Adrenal gland (tissue), 19 donors: ENCODE measurements at regions of chr19 and their contacts with region 1.

Region 1: DNA sequence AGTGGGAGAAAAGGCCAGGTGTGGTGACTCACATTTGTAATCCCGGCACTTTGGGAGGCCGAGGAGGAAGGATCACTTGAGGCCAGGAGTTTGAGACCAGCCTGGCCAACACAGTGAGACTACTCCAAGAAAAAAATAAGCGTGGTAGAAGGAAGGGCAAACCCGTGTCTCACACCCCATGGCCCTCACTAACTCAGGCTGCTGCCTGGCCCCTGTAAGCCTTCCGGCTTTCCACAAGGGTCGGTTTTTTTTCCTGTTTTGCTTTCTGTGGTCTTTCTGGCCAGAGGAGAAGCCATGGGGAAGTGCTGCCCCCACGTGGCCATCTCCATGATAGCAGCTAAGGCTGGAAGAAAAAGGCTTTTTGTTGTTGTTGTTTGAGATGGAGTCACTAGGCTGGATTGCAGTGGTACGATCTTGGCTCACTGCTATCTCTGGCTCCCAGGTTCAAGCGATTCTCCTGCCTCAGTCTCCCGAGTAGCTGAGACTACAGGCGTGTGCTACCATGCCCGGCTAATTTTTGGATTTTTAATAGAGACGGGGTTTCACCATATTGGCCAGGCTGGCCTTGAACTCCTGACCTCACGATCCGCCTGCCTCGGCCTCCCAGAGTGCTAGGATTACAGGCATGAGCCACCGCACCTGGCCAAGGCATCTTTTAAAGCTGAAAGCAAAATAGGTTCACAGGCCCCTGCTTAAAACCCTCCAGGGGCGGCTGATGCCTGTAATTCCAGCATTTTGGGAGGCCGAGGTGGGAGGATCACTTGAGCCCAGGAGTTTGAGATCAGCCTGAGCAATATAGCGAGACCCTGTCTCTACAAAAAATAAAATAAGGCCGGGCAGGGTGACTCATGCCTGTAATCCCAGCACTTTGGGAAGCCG is 7.5 kb upstream of the ARHGEF18 start:
- DNase-seq: peak; percentile 66 to 96 (median 86)
- H3K4me3 ChIP-seq: peak overlapping the region in 1 of 4 donors; percentile 17
- H3K27ac ChIP-seq: peak overlapping the region in 1 of 5 donors; percentile 14
- H3K4me1 ChIP-seq: peaks cover 0 to 12% of the 10 kb centered on the region in 2 donors
- H3K27me3 ChIP-seq: no peaks in the 10 kb centered on the region
- CTCF ChIP-seq: peak; percentile 96 to 98 (median 98)
- POLR2A ChIP-seq: no peak

Region 2: DNA sequence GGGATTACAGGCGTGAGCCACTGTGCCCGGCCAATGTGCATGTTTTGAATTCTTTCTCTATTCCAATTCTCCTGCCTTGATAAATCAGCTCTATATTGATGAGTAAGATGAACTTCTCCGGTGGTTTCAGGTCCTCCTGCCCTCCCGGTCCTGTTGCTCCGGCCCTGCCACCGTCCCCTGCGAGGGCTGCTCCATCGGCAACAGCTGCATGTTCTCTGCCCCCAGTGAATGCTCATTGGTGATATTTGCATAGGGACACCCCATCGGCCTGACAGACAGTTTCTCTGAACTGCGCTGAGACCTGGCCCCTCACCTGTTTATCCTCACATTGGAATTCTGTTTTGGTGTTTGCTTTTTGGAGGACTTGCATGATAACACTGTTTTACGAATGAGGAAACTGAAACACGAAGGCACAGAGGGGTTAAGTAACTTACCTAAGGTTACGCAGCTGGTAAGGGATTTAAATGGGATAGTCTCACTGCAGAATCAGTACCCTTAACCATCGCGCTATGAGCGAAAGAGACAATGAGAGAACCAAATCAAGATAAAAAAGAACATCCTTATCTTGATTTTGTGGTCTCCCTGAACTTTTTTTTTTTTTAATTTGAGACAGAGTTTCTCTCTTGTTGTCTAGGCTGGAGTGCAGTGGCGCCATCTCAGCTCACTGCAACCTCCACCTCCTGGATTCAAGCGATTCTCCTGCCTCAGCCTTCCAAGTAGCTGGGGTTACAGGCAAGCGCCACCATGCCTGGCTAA is 239.5 kb before region 1 on chr19:
- intact Hi-C with region 1: loop called in 1 of 2 experiments (anchors 2 kb)
- DNase-seq: no peak
- H3K4me3 ChIP-seq: no peak overlapping the region
- H3K27ac ChIP-seq: no peak overlapping the region
- H3K4me1 ChIP-seq: peaks cover 6% of the 10 kb centered on the region in 2 donors
- H3K27me3 ChIP-seq: no peaks in the 10 kb centered on the region
- CTCF ChIP-seq: no peak
- POLR2A ChIP-seq: no peak

Region 3: DNA sequence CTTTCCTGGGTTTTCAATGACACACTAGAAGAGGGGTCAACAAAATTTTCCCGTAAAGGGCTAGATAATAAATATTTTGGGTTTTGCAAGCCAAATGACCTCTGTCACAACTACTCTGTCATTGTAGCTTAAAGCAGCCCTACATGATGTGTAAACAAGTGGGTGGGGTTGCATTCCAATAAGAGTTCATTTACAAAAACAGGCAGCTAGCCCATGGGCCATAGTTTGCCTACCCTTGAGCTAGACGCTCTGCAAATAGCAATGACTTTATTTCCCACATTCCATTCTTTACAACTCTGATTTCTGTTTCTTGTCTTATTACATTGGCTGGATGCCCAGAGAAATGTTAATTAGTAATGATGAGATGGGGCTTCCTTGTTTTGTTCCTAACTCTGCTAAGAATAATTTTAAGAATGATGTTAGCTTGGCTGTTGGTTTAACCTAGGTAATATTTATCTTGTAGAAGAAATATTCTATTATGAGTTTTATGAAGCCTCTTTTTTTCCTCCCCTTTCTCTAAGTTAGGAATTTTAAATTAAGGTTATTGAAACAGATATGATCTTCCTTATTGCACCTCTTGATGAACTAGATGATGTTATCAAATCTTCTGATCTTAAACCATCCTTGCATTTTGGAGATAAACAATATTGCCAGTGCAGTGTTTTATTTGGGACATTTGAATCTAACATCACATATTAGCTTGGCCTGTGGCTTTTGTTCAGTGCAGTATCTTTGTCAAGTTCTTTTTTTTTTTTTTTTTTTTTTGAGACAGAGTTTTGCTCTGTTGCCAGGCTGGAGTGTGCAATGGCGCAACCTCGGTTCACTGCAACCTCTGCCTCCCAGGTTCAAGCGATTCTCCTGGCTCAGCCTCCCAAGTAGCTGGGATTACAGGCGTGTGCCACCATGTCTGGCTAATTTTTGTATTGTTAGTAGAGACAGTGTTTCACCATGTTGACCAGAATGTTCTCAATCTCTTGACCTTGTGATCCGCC is 195.4 kb before region 1 on chr19:
- intact Hi-C with region 1: loop called in 1 of 2 experiments (anchors 5 kb)
- DNase-seq: peak in 2 of 7 donors; percentile 12 to 35
- H3K4me3 ChIP-seq: no peak overlapping the region
- H3K27ac ChIP-seq: peak overlapping the region in 2 of 5 donors; percentile 25 to 35
- H3K4me1 ChIP-seq: no peaks in the 10 kb centered on the region
- H3K27me3 ChIP-seq: no peaks in the 10 kb centered on the region
- CTCF ChIP-seq: no peak
- POLR2A ChIP-seq: no peak

Region 4: GRCh38 chr19:7242601-7243258 is 98.5 kb before region 1 on chr19:
- intact Hi-C with region 1: no loop called
- DNase-seq: peak in 6 of 7 donors; percentile 53 to 80 (median 69)
- H3K4me3 ChIP-seq: no peak overlapping the region
- H3K27ac ChIP-seq: peak overlapping the region; percentile 65 to 90 (median 85)
- H3K4me1 ChIP-seq: peaks cover 8 to 38% of the 10 kb centered on the region in 2 donors
- H3K27me3 ChIP-seq: no peaks in the 10 kb centered on the region
- CTCF ChIP-seq: peak in 1 of 6 experiments; percentile 29
- POLR2A ChIP-seq: peak in 1 of 2 donors; percentile 63

Region 5: GRCh38 chr19:7304200-7304599 is 37.0 kb before region 1 on chr19:
- intact Hi-C with region 1: loop called in 1 of 2 experiments (anchors 2 kb)
- DNase-seq: no peak
- H3K4me3 ChIP-seq: no peak overlapping the region
- H3K27ac ChIP-seq: no peak overlapping the region
- H3K4me1 ChIP-seq: no peaks in the 10 kb centered on the region
- H3K27me3 ChIP-seq: no peaks in the 10 kb centered on the region
- CTCF ChIP-seq: no peak
- POLR2A ChIP-seq: no peak